Tibial artery (tissue), 4 donors: ENCODE measurements at regions of chr6 and their contacts with region 1.

Region 1: DNA sequence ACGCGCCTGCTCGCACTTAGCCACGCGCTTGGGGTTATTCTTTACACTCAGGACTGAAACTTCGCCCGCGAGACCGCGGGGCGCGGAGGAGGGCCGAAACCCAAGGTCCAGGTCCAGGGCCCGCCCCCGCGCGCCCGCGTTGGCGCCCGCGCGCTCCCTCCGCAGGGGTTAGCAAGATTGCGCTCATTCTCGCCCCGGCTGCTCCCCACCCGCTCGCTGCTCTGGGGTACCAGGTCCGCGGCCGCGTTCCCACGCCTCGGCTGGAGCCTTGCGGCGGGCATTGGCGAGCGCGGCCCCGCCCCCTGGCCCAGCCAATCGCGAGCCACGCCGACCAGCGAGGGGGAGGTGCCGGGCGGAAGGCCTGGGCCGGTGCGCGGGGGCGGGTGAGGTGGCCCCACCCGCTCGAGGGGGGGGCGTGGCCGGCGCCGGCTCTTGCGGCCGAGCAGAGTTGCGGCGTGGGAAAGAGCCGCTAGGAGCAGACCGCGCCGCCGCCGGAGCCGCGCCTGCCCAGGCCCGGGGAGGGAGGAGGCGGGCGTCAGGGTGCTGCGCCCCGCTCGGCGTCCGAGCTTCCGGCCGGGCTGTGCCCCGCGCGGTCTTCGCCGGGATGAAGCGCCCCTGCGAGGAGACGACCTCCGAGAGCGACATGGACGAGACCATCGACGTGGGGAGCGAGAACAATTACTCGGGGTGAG is at the start of gene HEY2:
- DNase-seq: peak; percentile 96 to 99
- H3K4me3 ChIP-seq: peak within 1 kb of the TSS; percentile 89 to 95
- H3K27ac ChIP-seq: peak within 1 kb of the TSS; percentile 99
- H3K4me1 ChIP-seq: peaks cover 0 to 28% (median 9%) of the 10 kb centered on the region in 4 donors
- H3K27me3 ChIP-seq: no peaks in the 10 kb centered on the region
- CTCF ChIP-seq: peak in 1 of 2 experiments; percentile 36

Region 2: GRCh38 chr6:125444006-125444923 is 305.1 kb before region 1 on chr6:
- intact Hi-C with region 1: loop called (anchors 5 kb)
- DNase-seq: peak; percentile 72 to 94
- H3K4me3 ChIP-seq: peak overlapping the region; percentile 50 to 57
- H3K27ac ChIP-seq: peak overlapping the region; percentile 79 to 91
- H3K4me1 ChIP-seq: peaks cover 0 to 65% (median 13%) of the 10 kb centered on the region in 4 donors
- H3K27me3 ChIP-seq: no peaks in the 10 kb centered on the region
- CTCF ChIP-seq: no peak

Region 3: DNA sequence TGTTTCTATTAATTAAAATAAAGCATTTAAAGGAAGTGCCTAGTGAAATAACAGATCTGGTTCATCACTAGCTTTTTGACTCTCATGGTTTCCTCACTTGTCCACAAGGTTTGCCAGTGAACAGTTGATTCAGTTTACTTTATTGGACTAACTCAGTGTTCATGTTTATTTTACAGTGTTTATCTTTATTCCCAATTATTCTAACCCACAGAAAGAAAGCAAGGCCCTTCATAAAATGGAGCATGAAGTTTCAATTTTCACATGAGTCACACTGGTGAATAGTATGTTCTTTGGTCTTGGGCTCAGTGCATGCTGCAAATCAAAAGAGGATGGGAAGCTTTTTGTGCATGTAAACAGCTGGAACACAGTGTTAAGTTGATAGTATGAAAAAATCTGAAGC is 230.0 kb before region 1 on chr6:
- intact Hi-C with region 1: no loop called
- DNase-seq: no peak
- H3K4me3 ChIP-seq: no peak overlapping the region
- H3K27ac ChIP-seq: no peak overlapping the region
- H3K4me1 ChIP-seq: no peaks in the 10 kb centered on the region
- H3K27me3 ChIP-seq: no peaks in the 10 kb centered on the region
- CTCF ChIP-seq: no peak

Region 4: GRCh38 chr6:125598422-125598821 is 150.9 kb before region 1 on chr6:
- intact Hi-C with region 1: loop called (anchors 10 kb)
- DNase-seq: peak; percentile 88 to 94
- H3K4me3 ChIP-seq: no peak overlapping the region
- H3K27ac ChIP-seq: peak overlapping the region; percentile 77 to 81
- H3K4me1 ChIP-seq: peaks cover 0 to 24% (median 8%) of the 10 kb centered on the region in 4 donors
- H3K27me3 ChIP-seq: no peaks in the 10 kb centered on the region
- CTCF ChIP-seq: no peak